CD4-positive, alpha-beta T cell (primary cell): ENCODE measurements at regions of chr6 and their contacts with region 1.

Region 1: DNA sequence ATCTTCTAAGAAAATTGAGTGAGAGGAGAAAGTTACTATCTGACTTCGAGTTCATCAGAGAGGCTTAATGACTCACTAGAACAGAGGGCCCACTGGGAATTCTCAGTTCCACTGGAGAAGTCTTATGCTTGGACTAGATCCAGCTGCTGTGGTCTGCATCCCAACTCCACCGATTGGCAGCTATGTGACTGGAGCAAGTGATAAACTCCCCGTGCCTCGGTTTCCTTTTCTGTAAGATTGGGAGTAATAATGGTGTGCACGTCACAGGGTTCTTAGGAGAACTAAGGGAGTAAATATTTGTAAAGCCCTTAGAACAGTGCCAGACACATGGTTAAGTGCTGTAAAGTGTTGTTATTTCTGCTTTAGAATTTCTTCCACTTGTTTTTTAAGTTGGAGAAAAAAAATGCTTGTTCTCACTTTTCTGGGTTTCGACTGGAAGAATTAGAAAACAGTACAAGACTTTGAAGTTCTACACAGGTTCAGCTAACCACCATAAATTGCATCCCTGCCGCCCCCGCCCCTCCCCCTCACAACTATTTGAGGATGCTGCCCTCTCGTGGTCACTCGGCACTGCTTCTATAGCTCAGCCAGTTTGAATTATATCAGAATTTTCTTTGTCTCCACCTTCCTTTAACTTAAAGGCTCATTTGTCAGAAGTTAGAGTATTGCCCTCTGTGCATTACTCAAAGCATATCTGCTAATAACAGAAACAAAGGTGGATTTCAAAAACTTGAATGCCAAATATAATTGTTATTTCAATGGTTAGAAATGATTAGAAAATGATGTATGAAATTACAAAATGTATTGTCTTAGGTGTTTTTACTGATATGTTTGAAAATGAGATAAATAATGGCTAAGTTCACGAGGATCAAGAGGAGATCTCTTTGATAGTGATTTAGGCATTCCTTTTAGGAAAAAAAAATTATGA is 95.0 kb upstream of the IFNGR1 start:
- DNase-seq: peak; percentile 52 to 87 (median 67)
- ATAC-seq: peak; percentile 77
- H3K4me3 ChIP-seq: no peak overlapping the region
- H3K4me3 Mint-ChIP-seq: no peak overlapping the region
- H3K27ac ChIP-seq: no peak overlapping the region
- H3K27ac Mint-ChIP-seq: no peak overlapping the region
- H3K4me1 ChIP-seq: peaks cover 7% of the 10 kb centered on the region
- H3K4me1 Mint-ChIP-seq: peaks cover 13% of the 10 kb centered on the region
- H3K27me3 ChIP-seq: no peaks in the 10 kb centered on the region
- H3K27me3 Mint-ChIP-seq: no peaks in the 10 kb centered on the region
- CTCF ChIP-seq: peak; percentile 84

Region 2: GRCh38 chr6:136751522-136751956 is 562.7 kb before region 1 on chr6:
- CTCF ChIA-PET with region 1: no interaction called
- POLR2A ChIA-PET with region 1: no interaction called
- intact Hi-C with region 1: no loop called
- DNase-seq: peak in 5 of 14 experiments; percentile 41 to 85 (median 68)
- ATAC-seq: peak; percentile 53
- H3K4me3 ChIP-seq: peak overlapping the region; percentile 27
- H3K4me3 Mint-ChIP-seq: peak overlapping the region; percentile 53
- H3K27ac ChIP-seq: peak overlapping the region; percentile 32 to 77
- H3K27ac Mint-ChIP-seq: peak overlapping the region; percentile 74
- H3K4me1 ChIP-seq: peaks cover 71% of the 10 kb centered on the region
- H3K4me1 Mint-ChIP-seq: peaks cover 84% of the 10 kb centered on the region
- H3K27me3 ChIP-seq: no peaks in the 10 kb centered on the region
- H3K27me3 Mint-ChIP-seq: no peaks in the 10 kb centered on the region
- CTCF ChIP-seq: no peak

Region 3: GRCh38 chr6:136967876-136968752 is 346.1 kb before region 1 on chr6:
- CTCF ChIA-PET with region 1: no interaction called
- POLR2A ChIA-PET with region 1: no interaction called
- intact Hi-C with region 1: loop called (anchors 5 kb)
- DNase-seq: peak; percentile 26 to 76 (median 42)
- ATAC-seq: peak; percentile 70
- H3K4me3 ChIP-seq: no peak overlapping the region
- H3K4me3 Mint-ChIP-seq: no peak overlapping the region
- H3K27ac ChIP-seq: no peak overlapping the region
- H3K27ac Mint-ChIP-seq: no peak overlapping the region
- H3K4me1 ChIP-seq: peaks cover 7% of the 10 kb centered on the region
- H3K4me1 Mint-ChIP-seq: no peaks in the 10 kb centered on the region
- H3K27me3 ChIP-seq: peaks cover 12 to 13% of the 10 kb centered on the region in 2 experiments
- H3K27me3 Mint-ChIP-seq: peaks cover 35% of the 10 kb centered on the region
- CTCF ChIP-seq: peak; percentile 69

Region 4: GRCh38 chr6:137076277-137077068 is 237.7 kb before region 1 on chr6:
- CTCF ChIA-PET with region 1: interaction called, 3 read pairs
- POLR2A ChIA-PET with region 1: no interaction called
- intact Hi-C with region 1: loop called (anchors 1 to 5 kb)
- DNase-seq: peak; percentile 11 to 76 (median 32)
- ATAC-seq: peak; percentile 72
- H3K4me3 ChIP-seq: no peak overlapping the region
- H3K4me3 Mint-ChIP-seq: no peak overlapping the region
- H3K27ac ChIP-seq: no peak overlapping the region
- H3K27ac Mint-ChIP-seq: no peak overlapping the region
- H3K4me1 ChIP-seq: no peaks in the 10 kb centered on the region
- H3K4me1 Mint-ChIP-seq: no peaks in the 10 kb centered on the region
- H3K27me3 ChIP-seq: peaks cover 0 to 6% of the 10 kb centered on the region in 2 experiments
- H3K27me3 Mint-ChIP-seq: peaks cover 37% of the 10 kb centered on the region
- CTCF ChIP-seq: peak; percentile 69

Region 5: DNA sequence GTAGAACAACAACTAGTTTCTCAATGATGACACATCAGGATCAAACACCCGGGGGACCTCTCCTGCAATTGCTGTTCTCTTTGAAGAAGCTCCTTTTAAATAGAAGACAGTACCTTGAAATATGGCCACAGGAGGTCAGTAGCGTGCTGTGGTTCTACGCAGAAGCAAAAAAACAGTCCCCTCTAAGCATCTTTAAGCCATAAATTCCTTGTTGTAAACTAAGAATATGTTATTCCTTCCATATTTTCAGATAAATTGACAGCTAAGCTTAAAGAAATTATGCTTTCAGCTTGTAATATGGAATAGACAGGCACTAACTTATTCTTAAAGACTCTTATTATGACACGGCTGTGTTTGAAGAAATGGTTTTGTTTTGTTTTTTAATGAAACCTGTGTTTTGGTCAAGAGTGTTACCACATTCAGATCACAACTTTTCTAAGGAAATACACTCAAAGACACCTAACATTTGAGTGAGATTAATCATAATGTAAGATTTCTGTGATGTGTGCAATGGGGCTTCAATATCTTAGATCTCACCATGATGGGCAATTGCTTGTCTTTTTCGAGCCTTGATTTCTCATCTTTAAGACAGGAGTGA is 219.7 kb before region 1 on chr6:
- CTCF ChIA-PET with region 1: interaction called, 21 read pairs
- POLR2A ChIA-PET with region 1: no interaction called
- intact Hi-C with region 1: loop called (anchors 1 kb)
- DNase-seq: peak; percentile 22 to 80 (median 37)
- ATAC-seq: no peak
- H3K4me3 ChIP-seq: no peak overlapping the region
- H3K4me3 Mint-ChIP-seq: no peak overlapping the region
- H3K27ac ChIP-seq: no peak overlapping the region
- H3K27ac Mint-ChIP-seq: no peak overlapping the region
- H3K4me1 ChIP-seq: peaks cover 9% of the 10 kb centered on the region
- H3K4me1 Mint-ChIP-seq: peaks cover 12% of the 10 kb centered on the region
- H3K27me3 ChIP-seq: no peaks in the 10 kb centered on the region
- H3K27me3 Mint-ChIP-seq: peaks cover 5% of the 10 kb centered on the region
- CTCF ChIP-seq: peak; percentile 71

Region 6: DNA sequence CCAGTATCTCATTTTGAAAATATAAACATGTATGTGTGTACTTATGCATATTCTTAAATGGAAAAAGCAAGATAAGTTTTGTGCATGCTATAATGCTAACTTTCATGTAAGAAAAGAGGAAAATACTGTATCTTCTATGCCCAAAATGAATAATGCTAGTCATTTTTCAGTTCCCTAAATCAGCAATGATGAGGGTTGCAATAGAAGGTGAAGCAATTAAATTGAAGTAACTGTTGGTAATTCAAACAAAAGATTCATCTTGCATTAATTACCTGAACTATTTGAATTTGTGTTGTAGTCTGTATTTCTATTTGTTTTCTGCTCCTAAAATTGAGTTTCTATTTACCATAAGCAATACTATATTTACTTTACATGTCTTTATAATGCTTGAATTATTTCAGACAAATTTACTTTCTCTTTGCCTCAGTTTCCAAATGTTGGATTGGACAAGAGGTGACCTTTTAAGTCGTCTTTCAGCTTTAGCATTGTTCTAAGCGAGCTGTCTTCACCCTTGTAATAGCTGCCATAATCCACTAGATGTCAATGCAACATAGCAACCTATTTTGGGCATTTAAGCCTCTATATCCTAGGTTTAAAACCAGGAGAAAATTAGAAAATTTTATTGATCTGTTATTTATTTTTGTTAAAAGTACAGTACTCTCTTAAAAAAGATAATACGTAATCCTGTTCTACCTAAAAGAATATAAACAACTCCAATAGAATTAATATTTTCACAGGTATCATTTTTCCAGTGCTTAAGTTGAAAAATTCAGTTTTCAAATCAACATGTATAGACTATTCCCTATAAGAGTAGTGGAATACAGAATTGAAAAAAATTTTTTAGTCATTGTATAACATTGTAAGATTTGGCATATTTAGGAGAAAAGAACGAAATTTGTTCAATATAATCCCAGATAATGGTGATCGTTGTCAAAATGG is 42.7 kb before region 1 on chr6:
- CTCF ChIA-PET with region 1: interaction called, 3 read pairs
- POLR2A ChIA-PET with region 1: no interaction called
- intact Hi-C with region 1: loop called (anchors 1 to 2 kb)
- DNase-seq: peak in 3 of 14 experiments; percentile 58 to 64 (median 62)
- ATAC-seq: peak; percentile 66
- H3K4me3 ChIP-seq: no peak overlapping the region
- H3K4me3 Mint-ChIP-seq: no peak overlapping the region
- H3K27ac ChIP-seq: no peak overlapping the region
- H3K27ac Mint-ChIP-seq: no peak overlapping the region
- H3K4me1 ChIP-seq: no peaks in the 10 kb centered on the region
- H3K4me1 Mint-ChIP-seq: peaks cover 4% of the 10 kb centered on the region
- H3K27me3 ChIP-seq: no peaks in the 10 kb centered on the region
- H3K27me3 Mint-ChIP-seq: peaks cover 8% of the 10 kb centered on the region
- CTCF ChIP-seq: peak; percentile 90